PC-3 (cell line): ENCODE measurements at regions of chr11 and their contacts with region 1.

Region 1: DNA sequence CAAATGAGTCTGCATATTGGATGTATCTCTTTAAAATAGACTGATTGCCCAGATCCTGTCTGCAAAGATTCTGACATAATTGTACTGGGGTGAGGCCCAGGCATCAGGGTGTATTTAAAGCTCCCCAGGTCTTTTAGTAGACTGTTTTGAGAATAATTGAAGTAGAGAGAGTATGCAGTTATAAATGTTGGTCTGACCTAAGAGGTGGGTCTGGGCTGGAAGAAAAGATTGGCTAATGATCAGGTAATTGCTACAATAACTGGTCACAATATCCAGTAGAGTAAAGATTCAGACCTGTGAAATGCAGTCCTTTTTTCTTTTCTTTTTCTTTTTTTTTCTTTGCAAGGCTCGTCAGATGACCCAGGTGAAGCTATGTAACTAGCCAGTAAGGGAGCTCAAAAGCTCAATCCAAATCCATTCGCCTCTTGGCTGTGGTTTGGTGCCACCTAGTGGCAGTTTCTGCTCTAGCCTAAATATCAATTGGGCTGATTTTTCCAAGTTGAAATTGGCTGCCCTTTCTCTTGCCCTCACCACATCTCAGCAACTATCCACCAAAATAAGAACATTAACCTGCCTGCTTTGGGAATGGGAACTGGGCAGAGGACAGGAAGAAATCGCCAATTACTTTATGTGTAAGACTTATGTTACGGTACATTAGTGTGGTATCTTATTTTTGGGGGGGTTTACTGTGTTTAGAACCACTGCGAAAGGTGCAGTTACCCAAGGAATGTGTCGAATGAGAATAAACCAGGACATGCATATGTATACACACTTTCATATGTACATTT is 45.9 kb downstream of the ZNF143 start:
- DNase-seq: peak; percentile 90
- ATAC-seq: peak; percentile 88
- H3K4me3 ChIP-seq: no peak overlapping the region
- H3K27ac ChIP-seq: no peak overlapping the region
- H3K4me1 ChIP-seq: no peaks in the 10 kb centered on the region
- H3K27me3 ChIP-seq: no peaks in the 10 kb centered on the region
- CTCF ChIP-seq: peak; percentile 91

Region 2: GRCh38 chr11:9170450-9170849 is 336.2 kb before region 1 on chr11:
- CTCF ChIA-PET with region 1: interaction called, 4 read pairs
- POLR2A ChIA-PET with region 1: no interaction called
- intact Hi-C with region 1: loop called (anchors 1 kb)
- DNase-seq: no peak
- ATAC-seq: peak; percentile 67
- H3K4me3 ChIP-seq: no peak overlapping the region
- H3K27ac ChIP-seq: no peak overlapping the region
- H3K4me1 ChIP-seq: peaks cover 10% of the 10 kb centered on the region; the same call in 1 of the 2 replicates
- H3K27me3 ChIP-seq: no peaks in the 10 kb centered on the region
- CTCF ChIP-seq: no peak

Region 3: DNA sequence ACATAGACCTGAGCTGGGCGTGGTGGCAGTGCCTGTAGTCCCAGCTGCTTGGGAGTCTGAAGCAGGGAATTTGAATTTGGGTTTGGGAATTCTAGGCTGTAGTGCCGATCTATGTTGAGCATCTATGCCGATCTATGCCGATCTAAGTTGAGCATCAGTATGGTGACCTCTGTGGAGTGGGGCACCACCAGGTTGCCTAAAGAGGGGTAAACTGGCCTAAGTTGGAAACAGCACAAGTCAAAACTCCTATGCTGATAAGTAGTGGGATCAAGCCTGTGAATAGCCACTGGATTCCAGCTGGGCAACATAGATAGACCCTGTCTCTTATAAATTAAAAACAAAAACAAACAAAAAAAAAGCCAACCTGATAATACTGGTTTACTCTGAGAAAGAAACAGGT is 74.2 kb after region 1 on chr11:
- CTCF ChIA-PET with region 1: no interaction called
- POLR2A ChIA-PET with region 1: no interaction called
- intact Hi-C with region 1: no loop called
- DNase-seq: no peak
- ATAC-seq: no peak
- H3K4me3 ChIP-seq: no peak overlapping the region
- H3K27ac ChIP-seq: no peak overlapping the region
- H3K4me1 ChIP-seq: peaks cover 19% of the 10 kb centered on the region
- H3K27me3 ChIP-seq: no peaks in the 10 kb centered on the region
- CTCF ChIP-seq: no peak